Activated CD8-positive, alpha-beta T cell treated with anti-CD3 and anti-CD28 coated beads for 36 hours (primary cell): ENCODE measurements at regions of chr17 and their contacts with region 1.

Region 1: DNA sequence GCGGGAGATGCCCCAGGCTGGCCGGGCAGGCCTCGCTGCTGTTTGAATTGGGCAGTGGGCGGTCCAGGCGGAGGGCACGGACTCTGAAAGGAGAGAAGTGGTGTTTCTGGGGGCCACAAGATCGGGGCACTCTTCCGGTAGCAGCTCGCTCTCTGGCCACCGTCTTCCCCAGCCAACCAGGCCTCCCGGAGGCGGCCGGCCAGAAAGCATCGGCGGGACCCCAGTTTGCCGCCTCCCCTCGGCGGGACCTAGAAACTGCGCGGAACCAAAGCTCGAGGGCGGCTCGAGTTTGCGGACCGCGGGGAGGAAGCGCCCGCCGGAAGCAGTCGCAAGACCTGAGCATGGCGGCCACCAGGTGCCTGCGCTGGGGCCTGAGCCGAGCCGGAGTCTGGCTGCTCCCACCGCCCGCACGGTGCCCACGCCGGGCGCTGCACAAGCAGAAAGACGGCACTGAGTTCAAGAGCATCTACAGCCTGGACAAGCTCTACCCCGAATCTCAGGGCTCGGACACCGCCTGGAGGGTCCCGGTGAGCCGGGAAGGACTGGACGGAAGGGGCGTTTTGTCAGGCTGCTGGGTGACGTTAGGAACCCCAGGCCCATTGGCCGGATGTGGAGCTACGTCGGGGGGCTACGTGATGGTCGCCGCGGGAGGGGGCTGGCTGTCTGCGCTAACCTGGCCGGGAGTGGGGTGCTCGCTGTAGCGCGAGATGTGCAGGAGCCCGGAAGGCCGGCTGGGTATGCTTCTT is at the start of gene MRPL58:
- DNase-seq: peak; percentile 90
- ATAC-seq: peak; percentile 95
- H3K4me3 Mint-ChIP-seq: peak within 1 kb of the TSS; percentile 88
- H3K27ac Mint-ChIP-seq: peak within 1 kb of the TSS; percentile 92
- H3K4me1 Mint-ChIP-seq: peaks cover 33% of the 10 kb centered on the region
- H3K27me3 Mint-ChIP-seq: no peaks in the 10 kb centered on the region
- CTCF ChIP-seq: peak; percentile 51
- total RNA-seq, gene MRPL58: 53.6 to 62.4 TPM

Region 2: GRCh38 chr17:74923533-74924249 is 88.8 kb before region 1 on chr17:
- CTCF ChIA-PET with region 1: interaction called, 13 read pairs
- POLR2A ChIA-PET with region 1: no interaction called
- intact Hi-C with region 1: no loop called
- DNase-seq: peak; percentile 76
- ATAC-seq: peak; percentile 77
- H3K4me3 Mint-ChIP-seq: no peak overlapping the region
- H3K27ac Mint-ChIP-seq: no peak overlapping the region
- H3K4me1 Mint-ChIP-seq: peaks cover 10% of the 10 kb centered on the region
- H3K27me3 Mint-ChIP-seq: peaks cover 39% of the 10 kb centered on the region
- CTCF ChIP-seq: peak; percentile 99

Region 3: GRCh38 chr17:74987418-74987908 is 25.1 kb before region 1 on chr17 and contains the start of gene CDR2L:
- CTCF ChIA-PET with region 1: interaction called, 39 read pairs
- POLR2A ChIA-PET with region 1: interaction called, 7 read pairs
- intact Hi-C with region 1: no loop called
- DNase-seq: peak; percentile 94
- ATAC-seq: peak; percentile 99
- H3K4me3 Mint-ChIP-seq: peak within 1 kb of the TSS; percentile 80
- H3K27ac Mint-ChIP-seq: no peak within 1 kb of the TSS
- H3K4me1 Mint-ChIP-seq: peaks cover 8% of the 10 kb centered on the region
- H3K27me3 Mint-ChIP-seq: peaks cover 19% of the 10 kb centered on the region
- CTCF ChIP-seq: peak; percentile 9
- total RNA-seq, gene CDR2L: 0.59 to 0.94 TPM

Region 4: GRCh38 chr17:74994476-74994875 is 18.0 kb before region 1 on chr17:
- CTCF ChIA-PET with region 1: interaction called, 39 read pairs
- POLR2A ChIA-PET with region 1: interaction called, 10 read pairs
- intact Hi-C with region 1: no loop called
- DNase-seq: no peak
- ATAC-seq: no peak
- H3K4me3 Mint-ChIP-seq: no peak overlapping the region
- H3K27ac Mint-ChIP-seq: no peak overlapping the region
- H3K4me1 Mint-ChIP-seq: peaks cover 2% of the 10 kb centered on the region
- H3K27me3 Mint-ChIP-seq: no peaks in the 10 kb centered on the region
- CTCF ChIP-seq: no peak

Region 5: GRCh38 chr17:75024686-75025397 is 12.3 kb after region 1 on chr17:
- CTCF ChIA-PET with region 1: interaction called, 26 read pairs
- POLR2A ChIA-PET with region 1: interaction called, 13 read pairs
- intact Hi-C with region 1: no loop called
- DNase-seq: peak; percentile 63
- ATAC-seq: peak; percentile 53
- H3K4me3 Mint-ChIP-seq: no peak overlapping the region
- H3K27ac Mint-ChIP-seq: no peak overlapping the region
- H3K4me1 Mint-ChIP-seq: peaks cover 13% of the 10 kb centered on the region
- H3K27me3 Mint-ChIP-seq: no peaks in the 10 kb centered on the region
- CTCF ChIP-seq: no peak

Region 6: GRCh38 chr17:75034236-75034908 is 21.9 kb after region 1 on chr17:
- CTCF ChIA-PET with region 1: interaction called, 16 read pairs
- POLR2A ChIA-PET with region 1: interaction called, 26 read pairs
- intact Hi-C with region 1: no loop called
- DNase-seq: peak; percentile 97
- ATAC-seq: peak; percentile 66
- H3K4me3 Mint-ChIP-seq: peak overlapping the region; percentile 96
- H3K27ac Mint-ChIP-seq: peak overlapping the region; percentile 97
- H3K4me1 Mint-ChIP-seq: peaks cover 42% of the 10 kb centered on the region
- H3K27me3 Mint-ChIP-seq: peaks cover 3% of the 10 kb centered on the region
- CTCF ChIP-seq: no peak

Region 7: DNA sequence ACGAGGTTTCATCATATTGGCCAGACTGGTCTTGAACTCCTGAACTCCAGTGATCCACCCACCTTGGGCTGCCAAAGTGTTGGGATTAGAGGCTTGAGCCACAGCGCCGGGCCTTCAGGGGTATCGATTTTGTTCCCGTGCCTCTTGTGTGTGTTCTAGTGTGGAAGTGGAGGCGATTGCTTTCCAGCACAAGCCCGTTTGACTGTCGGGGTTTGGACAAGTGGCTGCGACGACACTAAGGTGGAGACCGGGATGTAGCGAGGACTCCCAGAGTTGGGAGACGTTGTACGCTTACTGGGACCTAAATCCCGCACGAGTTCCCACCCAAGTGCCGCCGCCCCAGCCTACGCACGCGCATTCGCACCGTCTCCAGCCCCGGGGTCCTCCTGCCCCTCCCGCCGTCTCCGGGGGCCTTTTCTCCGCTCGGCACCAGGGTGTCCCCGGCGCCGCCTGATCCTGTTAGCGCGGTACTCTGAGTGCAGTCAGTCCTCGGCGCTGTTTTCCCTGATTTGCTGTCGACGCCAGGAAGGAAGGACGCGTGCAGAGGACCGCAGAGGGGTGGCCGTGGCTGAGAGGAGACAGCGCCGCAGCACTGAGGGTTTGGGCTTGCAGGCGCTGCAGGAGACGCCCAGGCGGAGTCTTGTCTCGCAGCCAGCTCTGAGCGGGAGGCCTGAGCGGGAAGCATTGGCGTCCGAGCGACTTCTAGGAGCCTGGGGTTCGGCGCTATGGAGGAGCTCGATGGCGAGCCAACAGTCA is 192.7 kb after region 1 on chr17 and contains the start of gene NUP85:
- CTCF ChIA-PET with region 1: interaction called, 17 read pairs
- POLR2A ChIA-PET with region 1: interaction called, 4 read pairs
- intact Hi-C with region 1: no loop called
- DNase-seq: peak; percentile 94
- ATAC-seq: peak; percentile 95
- H3K4me3 Mint-ChIP-seq: peak within 1 kb of the TSS; percentile 95
- H3K27ac Mint-ChIP-seq: peak within 1 kb of the TSS; percentile 100
- H3K4me1 Mint-ChIP-seq: peaks cover 22% of the 10 kb centered on the region
- H3K27me3 Mint-ChIP-seq: no peaks in the 10 kb centered on the region
- CTCF ChIP-seq: no peak
- total RNA-seq, gene NUP85: 108 to 116 TPM